ENCODE measurements at regions of chr1 and their contacts with region 1.

Region 1: GRCh38 chr1:208691012-208691411 is 446.8 kb upstream of the PLXNA2 start:
- DNase-seq: no peak
- H3K4me3 ChIP-seq: no peak overlapping the region
- H3K27ac ChIP-seq: no peak overlapping the region
- H3K4me1 ChIP-seq: no peaks in the 10 kb centered on the region
- H3K27me3 ChIP-seq: no peaks in the 10 kb centered on the region
- CTCF ChIP-seq: no peak

Region 2: GRCh38 chr1:208606959-208607358 is 84.1 kb before region 1 on chr1:
- CTCF ChIA-PET with region 1: interaction called, 15 read pairs
- POLR2A ChIA-PET with region 1: no interaction called
- intact Hi-C with region 1: no loop called
- DNase-seq: no peak
- H3K4me3 ChIP-seq: no peak overlapping the region
- H3K27ac ChIP-seq: no peak overlapping the region
- H3K4me1 ChIP-seq: no peaks in the 10 kb centered on the region
- H3K27me3 ChIP-seq: peaks cover 3% of the 10 kb centered on the region
- CTCF ChIP-seq: no peak

Region 3: DNA sequence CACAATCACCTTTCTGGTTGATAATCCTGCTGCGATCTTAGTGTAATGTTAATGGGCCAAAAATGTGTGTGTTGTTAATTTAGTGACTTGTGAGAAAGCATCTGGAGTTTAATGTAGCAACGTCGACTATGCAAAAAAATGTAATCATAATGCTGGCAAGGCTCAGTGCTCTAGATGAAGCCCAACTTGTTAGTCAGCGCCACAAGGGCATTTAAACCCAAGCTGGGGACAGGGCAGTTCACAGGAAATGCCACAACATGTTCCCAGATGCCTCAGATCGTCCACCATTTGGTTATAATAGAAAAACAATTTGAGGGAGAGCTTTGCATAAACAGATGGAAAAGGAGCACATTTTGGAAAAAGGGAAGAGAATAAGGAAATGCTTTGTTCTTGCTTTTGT is 138.6 kb after region 1 on chr1:
- CTCF ChIA-PET with region 1: no interaction called
- POLR2A ChIA-PET with region 1: no interaction called
- intact Hi-C with region 1: no loop called
- DNase-seq: no peak
- H3K4me3 ChIP-seq: no peak overlapping the region
- H3K27ac ChIP-seq: no peak overlapping the region
- H3K4me1 ChIP-seq: no peaks in the 10 kb centered on the region
- H3K27me3 ChIP-seq: peaks cover 87% of the 10 kb centered on the region
- CTCF ChIP-seq: no peak

Measured in PC-9 (cell line).